Posterior vena cava (tissue), 2 donors: ENCODE measurements at regions of chr12 and their contacts with region 1.

Region 1: DNA sequence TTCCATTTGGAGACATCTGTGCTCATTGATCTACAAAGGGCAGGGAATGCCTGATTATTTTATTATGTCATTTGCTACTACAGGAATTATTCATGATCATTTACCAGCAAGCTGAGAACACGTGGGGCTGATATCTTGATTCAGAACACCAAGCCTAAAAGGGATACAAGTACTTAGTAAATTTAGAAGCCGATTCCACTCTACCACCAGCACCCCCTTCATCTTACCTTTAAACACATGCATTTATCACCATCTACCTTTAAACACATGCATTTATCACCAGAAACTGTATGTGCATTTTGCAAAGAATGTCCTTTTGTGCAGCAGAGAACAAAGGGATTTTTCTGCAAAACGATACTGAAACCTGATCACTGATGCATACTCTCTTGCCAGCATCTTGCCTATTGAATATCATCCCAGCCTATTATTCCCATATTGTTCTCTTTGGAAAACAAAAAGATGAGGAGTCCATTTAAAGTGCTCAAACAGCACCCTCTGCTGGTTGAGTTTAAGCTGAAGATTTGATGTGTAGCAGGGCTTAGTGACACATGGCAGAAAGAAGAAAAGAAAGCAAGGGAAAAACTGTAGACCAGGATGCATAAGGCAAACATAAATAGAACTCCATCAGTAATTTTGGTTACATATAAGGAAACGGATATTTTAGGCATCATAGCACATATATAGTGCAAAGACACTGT is 132.6 kb upstream of the PLEKHG7 start:
- DNase-seq: no peak

Region 2: DNA sequence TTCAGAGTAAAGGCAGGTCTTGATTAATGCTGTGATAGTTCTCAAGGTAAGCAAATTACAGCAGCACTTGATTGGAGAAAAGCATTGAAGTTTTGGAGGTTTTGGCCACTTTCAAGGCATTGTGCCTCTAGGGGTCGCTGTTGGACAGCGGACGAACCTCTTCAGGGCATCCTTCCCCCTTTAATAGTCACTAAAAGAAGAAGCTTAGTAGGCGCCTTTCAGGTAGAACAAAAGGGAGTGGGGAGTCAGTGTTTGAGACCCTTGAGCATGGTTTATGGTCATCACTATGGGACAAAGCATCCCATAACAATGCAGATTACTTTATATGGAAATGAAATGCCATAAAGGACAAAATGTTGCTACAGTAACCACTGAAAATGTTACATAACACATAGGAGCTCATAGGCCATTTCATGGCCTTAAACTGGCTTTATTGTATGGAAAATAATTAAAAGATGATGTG is 1188.1 kb before region 1 on chr12:
- intact Hi-C with region 1: loop called in 1 of 2 experiments (anchors 5 kb)
- DNase-seq: peak; percentile 93

Region 3: GRCh38 chr12:91920276-91920675 is 649.9 kb before region 1 on chr12:
- intact Hi-C with region 1: no loop called
- DNase-seq: no peak